ENCODE measurements at regions of chr10 and their contacts with region 1.

Region 1: DNA sequence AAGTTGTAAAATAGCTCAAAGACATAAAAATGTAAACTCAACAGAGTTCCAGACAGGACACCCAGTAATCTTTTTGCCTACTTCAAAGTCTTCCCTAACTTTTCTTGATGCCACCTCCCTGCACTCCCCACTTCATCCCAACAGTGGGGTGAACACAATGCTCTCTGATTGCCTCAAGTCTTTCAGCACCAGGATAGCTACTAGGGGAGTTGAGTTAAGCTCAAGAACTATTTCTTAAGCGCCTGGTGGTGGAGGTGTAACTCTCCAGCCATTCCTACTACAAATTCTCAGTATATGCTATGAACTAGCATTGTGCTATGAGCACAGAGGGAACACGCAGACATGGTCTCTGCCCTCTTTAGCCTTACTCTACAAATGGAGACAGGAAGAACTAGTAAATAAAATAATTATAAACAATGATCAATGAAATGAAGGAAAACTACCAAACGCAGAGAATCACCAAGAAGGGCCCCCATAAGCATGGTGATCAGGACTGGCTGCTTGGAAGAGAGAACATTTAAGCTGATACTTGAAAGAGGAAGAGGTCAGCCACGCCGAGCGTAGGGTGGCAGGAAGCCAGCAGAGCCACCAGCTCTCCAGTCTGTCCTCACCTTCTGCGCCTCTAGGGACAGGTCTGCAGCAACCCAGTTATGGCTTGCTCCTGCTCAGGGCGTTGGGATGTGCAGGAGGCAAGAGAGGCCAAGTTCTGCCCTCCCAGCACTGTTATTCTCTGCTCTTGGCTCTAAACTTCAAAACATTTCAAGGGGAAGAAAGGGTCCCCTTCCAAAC is 16.7 kb upstream of the FRA10AC1 start:
- DNase-seq: no peak
- H3K4me3 ChIP-seq: no peak overlapping the region
- H3K27ac ChIP-seq: no peak overlapping the region; the same call in 1 of the 2 replicates
- H3K4me1 ChIP-seq: peaks cover 0 to 10% (median 2%) of the 10 kb centered on the region in 4 experiments; a peak in 3 of 7 replicates
- H3K27me3 ChIP-seq: no peaks in the 10 kb centered on the region
- CTCF ChIP-seq: no peak
- EP300 ChIP-seq: no peak
- POLR2A ChIP-seq: no peak
- RAD21 ChIP-seq: no peak

Region 2: DNA sequence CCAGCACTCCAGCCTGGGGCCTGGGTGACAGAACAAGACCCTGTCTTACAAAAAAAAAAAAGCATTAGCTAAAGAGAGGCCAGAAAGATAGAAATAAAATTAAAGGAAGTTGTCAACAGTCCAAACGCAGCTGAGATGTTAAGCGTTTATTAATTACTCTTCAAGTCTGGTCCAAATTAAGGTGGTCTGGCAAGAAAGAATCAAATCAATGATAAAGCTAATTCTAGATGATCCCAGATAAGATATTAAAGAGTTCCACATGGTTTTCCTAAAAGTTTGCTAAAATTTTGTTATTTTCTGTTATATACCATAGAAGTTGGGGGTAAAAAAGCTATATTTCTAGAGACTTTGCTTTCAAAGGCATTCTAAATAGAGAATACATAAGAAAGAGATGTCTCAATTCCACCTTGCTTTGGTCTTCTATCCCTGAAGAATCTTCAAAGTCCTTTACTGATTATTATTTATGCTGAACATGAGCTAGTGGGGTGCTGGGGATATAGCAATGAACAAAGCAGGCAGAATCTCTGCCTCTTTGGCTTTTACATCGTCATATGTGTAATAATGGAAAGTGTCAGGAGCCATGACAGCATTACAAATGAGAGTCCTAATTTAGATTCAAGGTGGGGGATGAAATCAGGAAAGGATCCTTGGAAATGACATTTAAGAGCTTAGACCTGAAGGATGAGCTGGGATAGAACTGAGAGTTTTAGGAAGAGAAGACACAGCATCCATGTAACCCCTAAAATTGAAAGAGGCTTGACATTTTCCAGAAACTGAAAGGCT is 40.1 kb before region 1 on chr10:
- CTCF ChIA-PET with region 1: no interaction called
- POLR2A ChIA-PET with region 1: no interaction called
- DNase-seq: no peak
- H3K4me3 ChIP-seq: no peak overlapping the region
- H3K27ac ChIP-seq: no peak overlapping the region
- H3K4me1 ChIP-seq: no peaks in the 10 kb centered on the region
- H3K27me3 ChIP-seq: no peaks in the 10 kb centered on the region
- CTCF ChIP-seq: no peak
- EP300 ChIP-seq: no peak
- POLR2A ChIP-seq: no peak
- RAD21 ChIP-seq: no peak

Region 3: DNA sequence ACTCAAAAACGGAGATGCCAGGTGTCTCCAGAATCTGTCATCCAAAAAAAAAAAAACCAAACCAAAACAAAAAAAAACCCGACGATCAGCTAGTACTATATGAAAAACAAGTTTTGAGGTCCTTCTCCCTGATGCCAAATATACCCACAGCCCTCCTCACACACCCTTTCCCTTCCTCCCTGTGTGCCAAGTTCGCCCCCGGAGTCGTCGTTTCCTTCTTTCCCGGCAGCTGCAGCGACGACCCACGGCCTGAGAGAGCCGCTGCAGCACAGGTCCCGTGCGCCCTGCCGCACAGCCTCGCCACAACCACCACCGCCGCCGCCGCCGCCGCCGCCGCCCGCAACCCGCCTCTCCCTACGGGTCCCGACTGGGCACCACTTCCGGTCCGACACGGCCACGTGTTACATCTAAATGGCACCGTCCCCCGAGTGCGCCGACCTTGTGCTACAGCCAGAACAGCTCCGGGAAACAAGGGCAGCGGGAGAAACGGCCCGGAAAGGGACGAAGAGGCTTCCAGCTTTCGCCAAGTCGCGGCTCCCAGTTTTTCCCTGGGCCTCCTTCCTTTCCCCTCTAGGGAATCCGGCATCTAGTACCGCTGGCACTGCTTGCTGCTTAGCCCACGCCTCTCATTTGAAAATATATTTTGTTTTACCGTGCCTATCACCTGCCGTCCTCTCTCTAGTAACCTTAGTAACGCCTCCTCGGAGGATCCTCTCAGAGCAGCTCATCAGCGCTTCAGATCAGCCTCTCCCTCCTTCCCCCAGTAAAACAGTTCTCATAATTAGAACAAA is 16.7 kb before region 1 on chr10 and contains the start of gene FRA10AC1:
- CTCF ChIA-PET with region 1: interaction called, 10 read pairs
- POLR2A ChIA-PET with region 1: interaction called, 6 read pairs
- DNase-seq: peak; percentile 65 to 97
- H3K4me3 ChIP-seq: peak within 1 kb of the TSS; percentile 76 to 85 (median 77)
- H3K27ac ChIP-seq: 0 out of 2 replicates have a peak within 1 kb of the TSS, but pooled peaks have one; percentile 24
- H3K4me1 ChIP-seq: peaks cover 0 to 3% (median 1%) of the 10 kb centered on the region in 4 experiments; a peak in 1 of 7 replicates
- H3K27me3 ChIP-seq: no peaks in the 10 kb centered on the region
- CTCF ChIP-seq: peak; percentile 45 to 62 (median 51); a peak in 3 of 4 replicates
- EP300 ChIP-seq: peak in 1 of 2 experiments; percentile 94; a peak in 2 of 3 replicates
- POLR2A ChIP-seq: peak; percentile 81 to 88
- RAD21 ChIP-seq: peak; percentile 46 to 59
- total RNA-seq, gene FRA10AC1: 11.9 and 13.5 TPM in 2 replicates